BJ (cell line): ENCODE measurements at regions of chr22 and their contacts with region 1.

Region 1: GRCh38 chr22:17562906-17563870 is at the start of gene SLC25A18:
- DNase-seq: no peak
- H3K4me3 ChIP-seq: no peak within 1 kb of the TSS
- H3K27me3 ChIP-seq: no peaks in the 10 kb centered on the region
- CTCF ChIP-seq: 0 out of 2 replicates have a peak, but pooled peaks have one; percentile 8
- polyA plus RNA-seq, gene SLC25A18: 0.07 TPM in 1 of 2 replicates, not detected in the other

Region 2: GRCh38 chr22:17548010-17548755 is 15.0 kb before region 1 on chr22:
- CTCF ChIA-PET with region 1: interaction called, 13 read pairs
- POLR2A ChIA-PET with region 1: interaction called, 6 read pairs
- DNase-seq: no peak
- H3K4me3 ChIP-seq: no peak overlapping the region
- H3K27me3 ChIP-seq: no peaks in the 10 kb centered on the region
- CTCF ChIP-seq: no peak

Region 3: DNA sequence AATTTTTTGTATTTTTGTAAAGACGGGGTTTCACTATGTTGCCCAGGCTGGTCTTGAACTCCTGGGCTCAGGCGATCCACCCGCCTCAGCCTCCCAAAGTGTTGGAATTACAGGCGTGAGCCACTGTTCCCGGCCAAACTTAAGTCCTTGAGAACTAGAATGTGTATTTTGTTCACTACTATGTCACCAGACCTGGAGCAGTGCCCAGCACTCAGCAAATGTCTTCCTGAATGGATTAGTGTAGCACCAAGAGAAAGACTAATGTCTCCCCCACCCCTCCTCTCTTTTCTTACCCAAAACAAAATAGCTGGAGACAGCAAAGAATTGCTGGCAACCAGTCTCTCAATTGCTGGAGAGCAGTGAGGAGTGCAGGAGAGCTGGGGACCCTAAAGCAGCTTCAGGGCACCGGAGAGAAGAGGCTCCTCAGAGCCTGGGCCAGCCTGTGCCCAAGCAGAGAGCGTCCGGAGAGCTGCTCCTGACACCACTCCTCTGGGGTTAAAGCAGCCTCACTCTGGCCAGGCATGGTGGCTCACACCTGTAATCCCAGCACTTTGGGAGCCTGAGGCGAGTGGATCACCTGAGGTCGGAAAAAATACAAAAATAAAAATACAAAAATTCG is 15.1 kb after region 1 on chr22:
- CTCF ChIA-PET with region 1: no interaction called
- POLR2A ChIA-PET with region 1: no interaction called
- DNase-seq: no peak
- H3K4me3 ChIP-seq: no peak overlapping the region
- H3K27me3 ChIP-seq: no peaks in the 10 kb centered on the region
- CTCF ChIP-seq: no peak

Region 4: DNA sequence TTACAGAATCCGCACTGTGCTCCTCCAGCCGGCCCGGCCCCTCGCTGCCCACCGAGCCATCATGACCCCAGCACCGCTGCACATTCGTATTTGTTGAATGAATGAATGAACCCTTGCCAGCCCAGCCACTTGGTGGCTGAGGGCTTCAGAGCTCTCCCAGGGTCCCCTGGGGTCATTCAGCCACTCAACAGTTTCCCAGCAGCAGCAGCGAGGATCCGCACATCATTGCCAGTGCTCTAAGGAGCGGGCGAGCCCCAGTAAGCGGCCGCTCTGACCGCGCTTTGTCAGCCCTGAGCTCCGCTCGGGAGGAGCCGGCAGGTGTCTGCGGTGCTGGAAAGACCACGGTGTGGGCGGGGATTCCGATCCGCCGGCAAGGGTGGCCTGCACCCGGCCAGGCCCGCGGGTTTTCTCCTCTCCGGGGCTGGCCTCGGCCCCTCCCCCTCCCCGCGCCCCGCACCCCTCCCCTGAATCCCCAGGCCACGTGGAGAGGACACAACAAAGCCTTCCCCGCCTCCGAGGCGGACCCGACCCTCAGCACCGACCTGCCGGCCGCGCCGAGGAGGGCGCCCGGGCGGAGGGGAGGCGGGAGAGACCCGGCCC is 210.5 kb after region 1 on chr22:
- CTCF ChIA-PET with region 1: interaction called, 11 read pairs
- POLR2A ChIA-PET with region 1: no interaction called
- DNase-seq: no peak
- H3K4me3 ChIP-seq: peak overlapping the region; percentile 72
- H3K27me3 ChIP-seq: no peaks in the 10 kb centered on the region
- CTCF ChIP-seq: no peak

Region 5: GRCh38 chr22:17785185-17786184 is 222.3 kb after region 1 on chr22:
- CTCF ChIA-PET with region 1: interaction called, 14 read pairs
- POLR2A ChIA-PET with region 1: no interaction called
- DNase-seq: no peak
- H3K4me3 ChIP-seq: no peak overlapping the region
- H3K27me3 ChIP-seq: no peaks in the 10 kb centered on the region
- CTCF ChIP-seq: peak; percentile 66